CD8-positive, alpha-beta memory T cell (primary cell): ENCODE measurements at regions of chr2 and their contacts with region 1.

Region 1: GRCh38 chr2:143264851-143265250 is 135.6 kb downstream of the ARHGAP15 start:
- DNase-seq: no peak
- H3K4me3 ChIP-seq: no peak overlapping the region
- H3K4me3 Mint-ChIP-seq: no peak overlapping the region
- H3K27ac ChIP-seq: no peak overlapping the region
- H3K27ac Mint-ChIP-seq: peak overlapping the region in 4 of 8 donors; percentile 17 to 80 (median 35)
- H3K4me1 ChIP-seq: peaks cover 50% of the 10 kb centered on the region
- H3K4me1 Mint-ChIP-seq: peaks cover 51 to 70% (median 54%) of the 10 kb centered on the region in 3 donors
- H3K27me3 ChIP-seq: no peaks in the 10 kb centered on the region
- H3K27me3 Mint-ChIP-seq: no peaks in the 10 kb centered on the region

Region 2: DNA sequence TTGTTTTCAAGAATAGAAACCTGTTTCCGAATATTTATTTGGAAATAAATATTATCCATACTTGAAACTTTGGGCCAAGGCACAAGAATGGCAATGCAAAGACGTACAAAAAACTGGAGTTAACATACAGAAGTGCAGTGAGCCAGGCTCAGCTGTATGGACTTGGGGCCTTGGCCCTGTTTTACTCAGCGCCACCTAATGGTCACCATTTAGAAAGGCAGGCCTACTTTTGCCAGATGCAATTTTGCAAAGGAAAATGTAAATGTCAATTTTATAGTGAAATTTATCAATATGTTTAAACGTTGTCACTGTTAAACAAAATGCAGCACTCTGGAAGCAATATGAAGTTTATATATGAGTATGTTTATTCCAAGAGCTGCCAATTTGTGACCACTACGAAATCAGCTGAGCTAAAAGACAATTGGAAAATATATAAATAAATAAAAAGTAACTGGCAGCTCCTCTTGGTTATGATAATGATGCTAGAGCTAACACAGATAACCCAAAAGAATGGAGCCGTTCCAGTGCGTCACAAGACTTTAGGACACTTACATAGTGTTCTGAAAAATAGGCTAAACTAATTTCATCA is 19.3 kb after region 1 on chr2:
- CTCF ChIA-PET with region 1: interaction called, 12 read pairs
- POLR2A ChIA-PET with region 1: interaction called, 3 read pairs
- DNase-seq: peak in 4 of 5 donors; percentile 10 to 50 (median 18)
- H3K4me3 ChIP-seq: no peak overlapping the region
- H3K4me3 Mint-ChIP-seq: peak overlapping the region in 1 of 7 donors; percentile 2
- H3K27ac ChIP-seq: no peak overlapping the region
- H3K27ac Mint-ChIP-seq: peak overlapping the region in 5 of 8 donors; percentile 2 to 62 (median 32)
- H3K4me1 ChIP-seq: peaks cover 8% of the 10 kb centered on the region
- H3K4me1 Mint-ChIP-seq: peaks cover 52 to 82% (median 80%) of the 10 kb centered on the region in 3 donors
- H3K27me3 ChIP-seq: no peaks in the 10 kb centered on the region
- H3K27me3 Mint-ChIP-seq: no peaks in the 10 kb centered on the region